Activated CD4-positive, alpha-beta T cell treated with anti-CD3 and anti-CD28 coated beads for 36 hours (primary cell): ENCODE measurements at regions of chr16 and their contacts with region 1.

Region 1: DNA sequence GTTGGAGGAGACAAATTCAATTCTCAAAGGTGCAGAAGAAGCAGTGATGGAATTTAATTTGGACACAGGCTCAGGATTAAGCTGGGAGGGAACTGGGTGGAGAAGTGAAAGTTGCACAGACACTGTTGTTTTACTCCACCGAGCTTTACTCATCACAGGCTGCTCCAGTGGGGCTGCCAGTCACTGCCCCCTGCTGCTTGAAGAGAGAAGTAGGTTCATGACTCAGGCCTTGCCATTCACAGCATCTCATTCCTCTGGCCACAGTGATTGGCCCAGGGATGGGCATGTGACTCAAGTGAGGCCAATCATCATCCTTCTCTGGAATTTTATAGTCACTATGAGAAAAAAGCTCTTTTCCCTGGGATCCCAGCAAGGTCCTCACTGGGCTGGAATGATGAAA is 11.8 kb downstream of the GNAO1 start:
- DNase-seq: peak; percentile 82
- ATAC-seq: peak; percentile 85
- H3K4me3 Mint-ChIP-seq: no peak overlapping the region
- H3K27ac Mint-ChIP-seq: no peak overlapping the region
- H3K4me1 Mint-ChIP-seq: peaks cover 23% of the 10 kb centered on the region
- H3K27me3 Mint-ChIP-seq: peaks cover 3% of the 10 kb centered on the region

Region 2: GRCh38 chr16:54929090-54930004 is 1273.7 kb before region 1 on chr16:
- CTCF ChIA-PET with region 1: no interaction called
- POLR2A ChIA-PET with region 1: no interaction called
- intact Hi-C with region 1: loop called in 1 of 2 experiments (anchors 2 kb)
- DNase-seq: peak; percentile 99
- ATAC-seq: peak; percentile 96
- H3K4me3 Mint-ChIP-seq: peak overlapping the region; percentile 72
- H3K27ac Mint-ChIP-seq: peak overlapping the region; percentile 62
- H3K4me1 Mint-ChIP-seq: peaks cover 32% of the 10 kb centered on the region
- H3K27me3 Mint-ChIP-seq: peaks cover 57% of the 10 kb centered on the region

Region 3: DNA sequence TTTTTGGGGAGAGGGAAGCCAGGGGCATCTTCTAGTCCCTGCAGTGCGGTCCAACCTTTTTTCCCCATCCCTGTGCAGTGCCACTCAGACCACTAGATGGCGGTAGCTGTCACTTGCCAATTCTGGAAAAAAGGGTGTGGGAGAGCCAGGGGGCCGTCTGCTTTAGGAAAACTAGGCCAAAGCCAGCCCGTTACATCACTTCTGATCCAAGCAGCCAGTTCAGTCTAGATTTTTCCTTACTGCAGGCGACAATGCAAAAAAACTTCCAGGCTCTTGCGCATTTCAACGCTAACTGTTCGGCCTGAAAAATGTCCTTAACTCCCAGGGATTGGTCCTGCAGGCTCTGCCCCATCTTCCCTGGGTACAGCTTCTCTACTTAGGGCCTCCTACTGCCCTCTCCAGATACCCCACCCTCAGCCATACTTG is 258.7 kb before region 1 on chr16:
- CTCF ChIA-PET with region 1: interaction called, 4 read pairs
- POLR2A ChIA-PET with region 1: no interaction called
- intact Hi-C with region 1: loop called (anchors 1 to 2 kb)
- DNase-seq: peak; percentile 68
- ATAC-seq: peak; percentile 39
- H3K4me3 Mint-ChIP-seq: no peak overlapping the region
- H3K27ac Mint-ChIP-seq: no peak overlapping the region
- H3K4me1 Mint-ChIP-seq: no peaks in the 10 kb centered on the region
- H3K27me3 Mint-ChIP-seq: peaks cover 35% of the 10 kb centered on the region

Region 4: DNA sequence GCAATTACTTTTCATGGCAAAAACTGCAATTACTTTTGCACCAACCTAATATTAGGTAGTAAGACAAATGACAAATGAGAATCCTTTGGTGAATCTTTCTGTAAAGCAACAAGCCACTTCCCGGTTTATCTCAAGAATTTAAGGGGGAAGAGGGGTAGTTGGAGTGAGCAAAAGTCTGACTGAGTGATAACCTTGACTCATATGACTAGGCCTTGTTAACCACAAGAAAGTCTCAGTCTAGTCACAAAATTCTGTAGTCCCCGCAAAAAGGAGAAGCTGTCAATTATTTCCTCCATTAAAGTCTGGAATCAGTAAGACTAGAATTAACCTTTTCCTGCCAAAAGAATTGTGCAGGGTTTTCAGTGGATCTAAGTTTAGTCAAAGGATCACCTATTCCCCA is 83.9 kb before region 1 on chr16:
- CTCF ChIA-PET with region 1: no interaction called
- POLR2A ChIA-PET with region 1: no interaction called
- intact Hi-C with region 1: loop called in 1 of 2 experiments (anchors 2 kb)
- DNase-seq: no peak
- ATAC-seq: peak; percentile 83
- H3K4me3 Mint-ChIP-seq: no peak overlapping the region
- H3K27ac Mint-ChIP-seq: no peak overlapping the region
- H3K4me1 Mint-ChIP-seq: no peaks in the 10 kb centered on the region
- H3K27me3 Mint-ChIP-seq: peaks cover 3% of the 10 kb centered on the region

Region 5: DNA sequence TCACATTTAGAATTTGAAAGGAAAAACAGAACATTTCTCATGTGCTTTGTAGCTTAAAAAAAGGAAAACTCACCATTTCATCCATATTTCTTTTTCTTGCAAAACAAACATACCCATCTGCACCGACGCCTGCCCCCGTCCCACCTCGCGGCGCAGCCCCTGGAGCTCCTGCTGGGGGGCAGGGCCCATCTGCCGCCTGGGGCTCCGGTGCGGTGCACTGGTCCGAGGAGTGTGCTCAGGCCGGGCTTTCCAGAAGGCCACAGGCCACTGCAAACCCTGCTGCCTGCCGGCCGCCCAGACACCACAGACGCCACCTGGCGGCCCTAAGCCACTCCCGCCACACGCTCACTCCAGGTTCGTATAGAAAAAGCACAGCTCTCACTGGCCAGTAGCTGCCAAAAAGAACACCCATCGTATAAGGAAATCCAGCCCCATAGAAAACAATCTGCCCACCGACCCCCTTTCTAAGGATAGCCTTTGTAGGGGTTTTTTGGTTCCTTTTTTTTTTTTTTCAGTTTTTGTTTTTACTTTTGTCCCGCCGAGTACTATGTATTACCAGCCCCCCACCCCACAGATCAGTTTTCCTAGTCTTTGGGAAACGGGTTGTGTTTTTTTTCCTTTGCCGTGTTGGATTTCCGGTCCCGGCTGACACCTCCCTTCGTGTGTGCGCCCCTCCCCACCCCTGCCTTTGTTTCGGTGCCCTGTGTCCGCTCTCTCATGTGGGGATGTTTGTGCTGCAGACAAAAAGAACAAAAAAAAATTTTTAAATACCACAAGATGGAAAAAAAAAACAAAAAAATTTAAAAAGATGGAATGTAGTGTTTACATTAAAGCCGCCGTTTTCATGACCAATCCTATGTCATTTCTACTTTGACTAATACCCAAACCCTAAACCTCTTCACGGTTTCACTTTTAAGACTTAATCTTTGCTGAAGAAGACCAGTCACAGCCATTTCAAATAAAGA is 153.5 kb after region 1 on chr16:
- CTCF ChIA-PET with region 1: no interaction called
- POLR2A ChIA-PET with region 1: no interaction called
- intact Hi-C with region 1: loop called in 1 of 2 experiments (anchors 2 kb)
- DNase-seq: peak; percentile 77
- ATAC-seq: peak; percentile 84
- H3K4me3 Mint-ChIP-seq: peak overlapping the region; percentile 78
- H3K27ac Mint-ChIP-seq: peak overlapping the region; percentile 98
- H3K4me1 Mint-ChIP-seq: peaks cover 29% of the 10 kb centered on the region
- H3K27me3 Mint-ChIP-seq: no peaks in the 10 kb centered on the region

Region 6: DNA sequence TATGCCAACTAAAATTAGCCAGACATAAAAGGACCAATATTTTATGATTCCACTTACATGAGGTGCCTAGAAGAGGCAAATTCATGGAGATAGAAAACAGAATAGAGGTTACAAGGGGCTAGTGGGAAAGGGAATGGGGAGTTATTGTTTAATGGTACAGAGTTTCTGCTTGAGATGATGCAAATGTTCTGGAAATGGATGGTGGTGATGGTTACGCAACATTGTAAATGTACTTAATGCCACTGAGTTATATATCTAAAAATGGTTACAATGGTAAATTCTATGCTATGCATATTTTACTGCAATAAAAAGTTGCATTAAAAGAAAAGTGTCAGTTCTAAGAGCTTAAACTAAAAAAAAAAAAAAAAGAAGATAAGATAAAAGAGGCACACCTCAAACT is 497.1 kb after region 1 on chr16:
- CTCF ChIA-PET with region 1: no interaction called
- POLR2A ChIA-PET with region 1: no interaction called
- intact Hi-C with region 1: no loop called
- DNase-seq: no peak
- ATAC-seq: no peak
- H3K4me3 Mint-ChIP-seq: no peak overlapping the region
- H3K27ac Mint-ChIP-seq: no peak overlapping the region
- H3K4me1 Mint-ChIP-seq: peaks cover 8% of the 10 kb centered on the region
- H3K27me3 Mint-ChIP-seq: no peaks in the 10 kb centered on the region

Region 7: DNA sequence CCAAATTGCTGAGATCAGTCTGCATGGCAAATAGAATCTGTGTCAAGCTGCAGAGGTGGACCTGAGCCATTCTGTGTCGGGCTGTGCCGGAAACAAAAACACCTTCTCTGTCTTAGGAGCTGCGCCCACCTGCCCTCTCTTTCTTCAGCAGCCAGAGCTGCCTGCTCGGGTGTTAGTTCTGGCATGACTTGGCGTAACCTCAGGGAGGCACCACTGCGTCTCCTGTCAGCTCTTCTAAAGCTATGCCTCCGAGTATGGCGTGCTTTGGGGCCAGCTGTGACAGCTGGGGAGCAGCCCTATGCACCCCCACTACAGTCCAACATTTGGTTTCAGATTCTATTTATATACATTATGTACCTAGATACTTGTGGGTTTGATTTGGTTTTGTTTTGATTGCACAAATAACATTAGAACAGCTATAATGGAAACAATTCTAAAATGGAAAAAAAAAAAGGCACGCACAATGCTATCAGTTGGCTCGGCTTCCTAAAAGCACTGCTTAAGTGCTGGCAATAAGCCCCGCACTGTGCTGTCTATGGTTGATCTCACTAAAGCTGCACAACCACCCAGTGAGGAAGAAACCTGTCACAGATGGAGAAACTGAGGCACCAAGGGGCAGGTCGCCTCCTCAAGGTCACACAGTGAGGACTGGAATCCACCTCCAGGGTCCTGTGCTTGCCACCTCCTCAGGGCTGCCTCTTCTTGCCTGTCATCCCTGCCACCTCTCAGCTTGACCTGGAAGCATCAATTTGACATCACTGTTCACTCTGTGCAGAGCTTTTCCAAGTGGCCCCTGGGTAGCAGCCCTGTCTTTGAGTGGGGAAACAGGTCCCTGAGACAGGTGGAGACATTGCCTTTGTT is 1406.7 kb after region 1 on chr16:
- CTCF ChIA-PET with region 1: no interaction called
- POLR2A ChIA-PET with region 1: no interaction called
- intact Hi-C with region 1: loop called in 1 of 2 experiments (anchors 5 kb)
- DNase-seq: peak; percentile 93
- ATAC-seq: peak; percentile 94
- H3K4me3 Mint-ChIP-seq: peak overlapping the region; percentile 48
- H3K27ac Mint-ChIP-seq: peak overlapping the region; percentile 92
- H3K4me1 Mint-ChIP-seq: peaks cover 60% of the 10 kb centered on the region
- H3K27me3 Mint-ChIP-seq: no peaks in the 10 kb centered on the region